ENCODE measurements at regions of chr17 and their contacts with region 1.

Region 1: GRCh38 chr17:77842528-77843147 is 115.9 kb upstream of the TNRC6C start:
- DNase-seq: no peak
- H3K4me3 Mint-ChIP-seq: peak overlapping the region; percentile 5
- H3K27ac Mint-ChIP-seq: no peak overlapping the region
- H3K4me1 Mint-ChIP-seq: peaks cover 43% of the 10 kb centered on the region
- H3K27me3 Mint-ChIP-seq: peaks cover 21% of the 10 kb centered on the region

Region 2: DNA sequence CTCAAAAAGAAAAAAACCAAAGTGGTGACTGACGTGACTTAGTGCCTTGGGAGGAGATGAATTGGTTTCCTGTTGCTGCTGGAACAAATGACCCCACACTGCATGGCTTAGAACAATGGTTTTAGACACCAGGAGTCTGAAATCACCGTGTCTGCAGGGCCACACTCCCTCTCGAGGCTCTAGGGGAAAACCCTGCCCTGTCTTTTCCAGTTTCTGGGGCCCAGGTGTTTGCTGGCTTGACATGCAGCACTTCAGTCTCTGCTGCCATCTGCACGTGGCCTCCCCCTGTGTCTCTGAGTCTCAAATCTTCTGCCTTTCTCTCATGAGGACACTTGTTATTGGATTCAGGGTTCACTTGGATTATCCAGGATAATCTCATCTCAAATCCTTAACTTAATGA is 207.9 kb before region 1 on chr17:
- intact Hi-C with region 1: loop called (anchors 2 kb)
- DNase-seq: peak; percentile 30
- H3K4me3 Mint-ChIP-seq: no peak overlapping the region
- H3K27ac Mint-ChIP-seq: peak overlapping the region; percentile 68
- H3K4me1 Mint-ChIP-seq: peaks cover 20% of the 10 kb centered on the region
- H3K27me3 Mint-ChIP-seq: peaks cover 2% of the 10 kb centered on the region

Region 3: DNA sequence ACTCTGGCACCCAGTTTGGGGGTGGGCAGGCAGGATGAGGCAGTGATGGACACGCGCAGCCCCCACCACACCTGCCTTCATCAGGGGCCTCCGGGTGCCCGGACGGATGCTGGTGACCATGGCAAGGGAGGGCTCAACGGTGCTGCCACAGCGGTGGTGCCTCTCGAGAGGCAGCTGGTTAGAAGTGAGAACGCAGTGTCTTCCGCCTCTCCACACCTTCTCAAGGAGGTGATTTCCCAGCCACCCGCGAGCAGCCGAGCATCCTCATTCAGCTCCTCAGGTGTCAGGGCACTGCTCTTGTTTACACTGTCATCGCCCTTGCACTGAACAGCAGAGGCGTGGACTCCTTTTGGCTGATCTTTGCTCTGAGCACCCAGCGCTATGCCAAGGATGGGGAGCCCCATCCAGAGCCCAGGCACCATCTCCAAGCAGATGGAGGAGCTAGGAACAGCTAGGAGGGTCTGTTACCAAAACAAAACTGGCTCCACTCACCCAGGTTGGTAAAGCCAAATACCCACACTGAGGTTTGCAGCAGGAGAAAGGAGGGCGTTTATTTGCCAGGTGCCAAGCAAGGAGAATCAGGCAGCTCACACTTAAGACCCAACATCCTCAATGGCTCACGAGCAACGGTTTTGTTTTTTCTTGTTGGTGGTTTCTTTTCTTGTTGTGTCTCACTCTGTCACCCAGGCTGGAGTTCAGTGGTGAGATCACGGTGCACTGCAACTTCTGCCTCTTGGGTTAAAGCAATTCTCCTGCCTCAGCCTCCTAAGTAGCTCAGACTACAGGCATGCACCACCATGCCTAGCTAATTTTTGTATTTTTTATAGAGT is 58.4 kb before region 1 on chr17:
- intact Hi-C with region 1: loop called (anchors 1 kb)
- DNase-seq: peak; percentile 71
- H3K4me3 Mint-ChIP-seq: peak overlapping the region; percentile 37
- H3K27ac Mint-ChIP-seq: peak overlapping the region; percentile 75
- H3K4me1 Mint-ChIP-seq: peaks cover 21% of the 10 kb centered on the region
- H3K27me3 Mint-ChIP-seq: peaks cover 26% of the 10 kb centered on the region

Region 4: DNA sequence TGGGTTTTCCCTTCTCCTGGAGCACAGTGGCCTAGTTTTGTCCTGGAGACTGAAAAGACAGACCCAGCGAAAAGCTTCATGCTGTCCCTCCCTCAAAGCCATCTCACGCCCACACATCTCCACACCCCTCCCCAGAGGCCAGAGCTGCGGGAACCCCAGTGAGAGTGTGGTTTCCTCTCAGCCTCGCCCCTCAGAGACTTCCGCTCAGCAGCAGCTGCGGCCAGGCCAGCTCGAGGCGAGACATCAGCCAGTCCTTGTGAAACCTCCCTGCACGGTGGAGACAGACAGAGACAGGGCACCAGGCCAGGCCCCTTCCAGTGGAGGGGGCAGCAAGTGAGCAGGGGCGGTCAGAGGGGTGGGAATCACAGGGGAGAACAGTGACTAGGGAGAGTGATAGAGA is 38.9 kb after region 1 on chr17:
- intact Hi-C with region 1: loop called (anchors 1 kb)
- DNase-seq: peak; percentile 82
- H3K4me3 Mint-ChIP-seq: peak overlapping the region; percentile 64
- H3K27ac Mint-ChIP-seq: peak overlapping the region; percentile 95
- H3K4me1 Mint-ChIP-seq: peaks cover 53% of the 10 kb centered on the region
- H3K27me3 Mint-ChIP-seq: peaks cover 15% of the 10 kb centered on the region

Measured in activated T-helper 1 cell treated with anti-CD3 and anti-CD28 coated beads, Interleukin-12 subunit alpha, Interleukin-12 subunit beta, Interleukin-2, Interleukin-4 antibody, amounts not matched to agents 30 ng/mL and 10 ng/mL and 1 ng/mL, durations not matched to agents 14 hours and 24 hours and 36 hours (primary cell).